SK-N-SH (cell line): ENCODE measurements at regions of chr1 and their contacts with region 1.

Region 1: DNA sequence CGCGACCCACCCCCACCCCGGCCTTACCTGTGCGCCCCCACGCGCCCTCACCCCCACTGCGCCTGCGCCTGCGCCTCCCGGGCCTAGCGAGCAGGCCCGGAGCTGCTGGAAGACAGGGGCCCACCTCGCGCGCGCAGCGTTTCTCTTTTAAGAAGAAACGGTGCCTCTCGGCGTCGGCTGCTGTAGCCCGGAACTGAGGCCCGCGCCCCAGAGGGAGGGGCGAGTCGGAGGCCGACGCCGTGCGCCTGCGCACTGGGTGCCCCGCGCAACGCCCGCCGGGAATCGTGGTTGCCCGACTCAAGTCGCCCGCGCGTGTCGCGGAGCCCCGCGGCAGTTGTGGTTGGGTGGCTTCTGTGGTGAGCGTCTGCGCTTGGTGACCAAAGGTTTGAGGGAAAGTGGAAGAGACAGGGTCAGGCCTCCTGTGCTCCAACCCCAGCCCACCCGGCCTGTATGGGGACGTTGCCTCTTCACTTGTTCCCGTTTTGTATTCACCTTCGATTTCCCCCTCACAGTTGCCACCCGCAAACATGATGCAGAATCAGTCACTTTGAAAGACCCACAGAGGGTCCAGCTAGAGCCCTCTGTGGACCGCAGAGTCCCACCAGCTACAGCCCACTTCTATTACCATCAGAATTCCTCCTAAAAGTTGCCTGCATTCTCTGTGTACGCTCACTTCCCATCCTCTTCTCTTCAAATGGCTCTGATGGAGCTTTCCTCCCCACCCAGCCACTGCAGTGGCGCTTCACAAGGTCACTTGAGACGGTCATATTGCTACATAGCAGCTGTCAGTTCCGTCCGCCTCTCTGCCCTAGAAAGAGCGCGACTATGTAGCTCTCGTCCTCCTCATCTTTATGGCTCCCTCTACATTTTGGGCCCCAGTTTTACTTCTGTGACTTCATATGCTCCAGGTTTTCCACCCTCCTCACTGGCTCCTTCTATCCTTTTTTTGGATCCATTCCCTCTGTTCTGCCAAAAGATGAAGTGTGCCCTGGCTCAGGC is at the start of gene ZNF692:
- DNase-seq: peak; percentile 97
- H3K4me3 ChIP-seq: peak within 1 kb of the TSS; percentile 62 to 66
- H3K27ac ChIP-seq: peak within 1 kb of the TSS; percentile 32 to 89
- H3K4me1 ChIP-seq: peaks cover 13 to 31% of the 10 kb centered on the region in 2 experiments; a peak in 3 of 4 replicates
- H3K27me3 ChIP-seq: no peaks in the 10 kb centered on the region
- CTCF ChIP-seq: no peak
- EP300 ChIP-seq: no peak
- RAD21 ChIP-seq: no peak
- polyA plus RNA-seq, gene ZNF692: 47.0 and 62.9 TPM in 2 replicates

Region 2: DNA sequence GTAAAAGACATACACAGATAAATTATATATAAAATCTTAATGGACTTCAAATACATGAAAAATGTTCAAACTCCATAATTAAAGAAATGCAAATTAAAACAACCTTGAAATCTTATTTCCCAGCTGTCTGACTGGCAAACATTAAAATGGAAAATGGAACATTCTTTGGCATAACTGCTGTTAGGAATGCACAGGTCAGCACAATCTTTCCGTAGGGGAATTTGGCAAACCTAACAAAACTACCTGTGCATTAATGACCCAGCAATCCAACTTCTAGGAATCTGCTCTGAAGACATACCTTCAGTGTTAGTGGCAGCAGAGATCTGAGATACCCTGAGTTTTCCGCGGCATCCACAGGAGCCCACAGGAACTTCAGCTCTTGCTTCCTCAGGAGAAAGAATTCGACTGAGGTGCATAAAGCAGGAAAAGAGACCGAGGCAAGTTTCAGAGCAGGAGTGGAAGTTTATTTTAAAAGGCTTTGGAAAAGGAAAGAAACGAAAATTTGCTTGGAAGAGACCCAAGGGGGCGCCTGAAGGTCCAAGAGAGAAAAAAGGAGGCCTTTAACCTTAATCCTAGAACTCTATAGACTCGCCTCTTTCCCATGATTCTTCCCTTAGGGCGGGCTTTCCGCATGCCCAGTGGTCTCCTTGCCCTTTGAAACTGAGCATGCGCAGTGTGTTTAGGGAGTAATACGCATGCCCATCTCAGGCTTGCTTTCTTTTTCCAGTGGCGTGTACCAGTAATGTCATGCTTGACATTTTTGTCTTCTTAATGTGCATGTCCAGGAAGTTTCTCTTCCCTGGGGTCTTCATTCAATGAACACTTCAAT is 128.5 kb before region 1 on chr1:
- CTCF ChIA-PET with region 1: no interaction called
- POLR2A ChIA-PET with region 1: no interaction called
- DNase-seq: peak; percentile 63
- H3K4me3 ChIP-seq: peak overlapping the region; percentile 51 to 59
- H3K27ac ChIP-seq: peak overlapping the region; percentile 7 to 17; a peak in 2 of 4 replicates
- H3K4me1 ChIP-seq: no peaks in the 10 kb centered on the region
- H3K27me3 ChIP-seq: no peaks in the 10 kb centered on the region; the same call in 1 of the 2 replicates
- CTCF ChIP-seq: 0 out of 2 replicates have a peak, but pooled peaks have one; percentile 9
- EP300 ChIP-seq: no peak
- RAD21 ChIP-seq: no peak

Region 3: GRCh38 chr1:248757784-248758195 is 101.4 kb before region 1 on chr1:
- CTCF ChIA-PET with region 1: no interaction called
- POLR2A ChIA-PET with region 1: no interaction called
- DNase-seq: no peak
- H3K4me3 ChIP-seq: no peak overlapping the region
- H3K27ac ChIP-seq: no peak overlapping the region
- H3K4me1 ChIP-seq: no peaks in the 10 kb centered on the region
- H3K27me3 ChIP-seq: no peaks in the 10 kb centered on the region
- CTCF ChIP-seq: no peak
- EP300 ChIP-seq: no peak
- RAD21 ChIP-seq: no peak

Region 4: DNA sequence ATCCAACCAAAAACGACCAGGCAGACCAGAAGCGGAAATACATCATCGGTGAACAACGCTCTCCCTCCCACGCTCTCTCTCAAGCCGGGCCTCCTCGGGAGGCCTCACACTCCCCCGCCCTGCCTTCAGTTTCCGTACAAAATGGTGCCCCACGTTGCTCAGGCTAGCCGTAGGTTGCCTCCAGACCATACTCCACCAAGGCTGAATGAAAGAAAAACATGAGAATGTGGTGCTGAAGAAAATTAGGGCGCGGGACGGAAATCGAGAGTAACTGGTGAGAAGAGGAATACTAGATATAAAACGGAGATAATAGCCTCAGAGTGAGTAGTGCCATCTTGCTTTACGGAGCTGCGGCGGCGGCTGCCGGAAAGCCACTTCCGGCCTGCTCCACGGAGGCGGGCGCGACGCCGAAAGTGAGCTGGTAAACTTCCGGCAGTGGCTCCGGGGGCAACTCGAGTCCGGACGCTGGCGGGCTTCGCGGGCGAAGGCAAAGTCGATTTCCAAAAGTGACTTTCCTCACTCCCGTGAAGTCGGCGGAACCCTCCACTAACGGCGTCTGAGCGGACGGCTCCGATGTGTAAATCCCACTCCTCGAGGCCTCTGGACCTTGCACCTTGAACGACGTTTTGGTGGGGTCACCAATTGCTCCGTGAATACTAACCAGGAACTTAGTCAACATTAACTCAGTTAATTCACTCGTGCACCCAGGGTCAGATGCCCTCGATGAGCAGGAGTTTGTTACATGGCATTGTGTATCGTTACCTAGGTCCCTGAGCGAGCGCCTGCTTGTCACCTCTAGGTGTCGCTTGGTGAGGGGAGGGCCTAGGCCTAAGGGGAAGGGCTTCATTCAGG is 33.1 kb before region 1 on chr1 and contains the start of gene SH3BP5L:
- CTCF ChIA-PET with region 1: interaction called, 20 read pairs
- POLR2A ChIA-PET with region 1: interaction called, 6 read pairs
- DNase-seq: peak; percentile 95
- H3K4me3 ChIP-seq: peak within 1 kb of the TSS; percentile 72
- H3K27ac ChIP-seq: peak within 1 kb of the TSS; percentile 92 to 98
- H3K4me1 ChIP-seq: peaks cover 34 to 38% of the 10 kb centered on the region in 2 experiments
- H3K27me3 ChIP-seq: no peaks in the 10 kb centered on the region
- CTCF ChIP-seq: peak; percentile 70
- EP300 ChIP-seq: 0 out of 4 replicates have a peak, but pooled peaks of 1 of the 2 experiments have one; percentile 26
- RAD21 ChIP-seq: peak; percentile 39
- polyA plus RNA-seq, gene SH3BP5L: 32.1 and 37.3 TPM in 2 replicates

Region 5: GRCh38 chr1:248873409-248873992 is 14.3 kb after region 1 on chr1:
- CTCF ChIA-PET with region 1: interaction called, 19 read pairs
- POLR2A ChIA-PET with region 1: interaction called, 18 read pairs
- DNase-seq: peak; percentile 84
- H3K4me3 ChIP-seq: peak overlapping the region; percentile 77 to 99
- H3K27ac ChIP-seq: peak overlapping the region; percentile 93 to 99
- H3K4me1 ChIP-seq: peaks cover 0 to 5% of the 10 kb centered on the region in 2 experiments; a peak in 2 of 4 replicates
- H3K27me3 ChIP-seq: no peaks in the 10 kb centered on the region
- CTCF ChIP-seq: no peak
- EP300 ChIP-seq: peak in 1 of 2 experiments; percentile 50; a peak in 2 of 4 replicates
- RAD21 ChIP-seq: no peak